Activated CD8-positive, alpha-beta T cell treated with anti-CD3 and anti-CD28 coated beads for 36 hours (primary cell): ENCODE measurements at regions of chr20 and their contacts with region 1.

Region 1: DNA sequence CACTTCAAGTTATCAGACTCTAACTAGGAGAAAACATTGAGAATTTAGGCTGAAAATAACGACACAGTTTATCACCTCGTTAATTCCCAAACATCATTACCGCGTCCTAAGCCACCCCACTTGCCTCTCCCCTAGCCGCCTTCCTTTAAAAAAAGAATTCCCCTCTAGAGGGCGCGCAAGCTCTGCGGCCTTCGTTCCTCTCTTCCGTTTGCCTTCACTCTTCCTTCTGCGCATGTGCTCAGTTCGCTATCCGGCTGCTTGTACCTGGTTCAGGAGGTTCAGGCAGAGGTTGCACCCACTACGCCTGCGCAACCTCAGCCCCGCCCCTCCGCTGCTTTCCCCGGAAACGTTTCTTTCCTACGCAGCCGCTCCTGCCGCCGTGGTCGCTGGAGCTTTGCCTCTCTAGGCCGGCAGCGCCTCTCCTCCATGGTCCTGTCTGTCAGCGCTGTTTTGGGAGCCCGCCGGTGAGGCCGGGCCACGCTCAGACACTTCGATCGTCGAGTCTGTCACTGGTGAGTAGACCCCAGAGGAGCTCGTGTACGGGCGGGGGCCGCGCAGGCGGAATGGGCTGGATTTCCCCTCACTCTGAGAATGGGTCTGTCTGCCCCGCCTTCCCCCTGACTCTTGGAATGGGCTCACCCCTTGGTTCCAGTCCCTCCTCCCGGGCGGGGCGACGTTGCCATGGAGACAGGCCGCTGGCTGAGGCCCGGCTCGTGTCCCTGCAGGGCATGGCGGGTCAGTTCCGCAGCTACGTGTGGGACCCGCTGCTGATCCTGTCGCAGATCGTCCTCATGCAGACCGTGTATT is at the start of gene SYS1:
- DNase-seq: peak; percentile 98
- ATAC-seq: peak; percentile 90
- H3K4me3 Mint-ChIP-seq: peak within 1 kb of the TSS; percentile 100
- H3K27ac Mint-ChIP-seq: peak within 1 kb of the TSS; percentile 98
- H3K4me1 Mint-ChIP-seq: peaks cover 48% of the 10 kb centered on the region
- H3K27me3 Mint-ChIP-seq: no peaks in the 10 kb centered on the region
- CTCF ChIP-seq: peak; percentile 89
- total RNA-seq, gene SYS1: 19.6 to 20.7 TPM

Region 2: DNA sequence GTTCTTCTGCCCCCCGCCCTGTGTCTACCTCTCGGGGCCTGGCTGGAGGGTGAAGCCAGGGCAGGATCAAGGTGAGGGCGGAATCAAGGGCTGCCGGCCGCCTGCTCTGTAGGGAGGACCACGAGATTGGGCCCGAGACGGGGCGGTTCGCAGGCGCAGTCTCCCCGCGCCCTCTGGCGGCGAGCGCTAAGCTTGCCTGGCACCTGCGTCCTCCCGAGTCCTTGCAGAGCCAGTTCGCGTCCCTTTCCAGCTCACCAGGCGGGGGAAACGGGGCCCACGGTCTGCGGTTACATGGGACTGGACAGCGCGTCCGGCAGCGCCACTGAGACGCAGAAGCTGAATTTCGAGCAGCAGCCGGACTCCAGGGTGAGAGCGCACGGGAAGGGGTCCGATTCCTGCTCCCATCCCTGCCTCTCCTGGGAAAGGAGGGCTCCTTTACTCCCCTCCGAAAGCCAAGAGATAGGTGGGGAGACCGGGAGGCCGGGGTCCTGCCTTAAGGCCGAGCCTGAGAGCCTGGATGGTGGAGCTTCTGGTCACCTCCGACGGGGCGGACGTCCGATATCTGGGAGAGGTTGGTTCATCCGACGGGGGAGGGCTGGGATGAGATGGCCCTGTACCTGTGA is 51.3 kb before region 1 on chr20:
- CTCF ChIA-PET with region 1: interaction called, 4 read pairs
- POLR2A ChIA-PET with region 1: no interaction called
- intact Hi-C with region 1: loop called (anchors 5 kb)
- DNase-seq: peak; percentile 74
- ATAC-seq: peak; percentile 80
- H3K4me3 Mint-ChIP-seq: no peak overlapping the region
- H3K27ac Mint-ChIP-seq: no peak overlapping the region
- H3K4me1 Mint-ChIP-seq: peaks cover 5% of the 10 kb centered on the region
- H3K27me3 Mint-ChIP-seq: peaks cover 57% of the 10 kb centered on the region
- CTCF ChIP-seq: peak; percentile 93

Region 3: GRCh38 chr20:45322952-45323383 is 40.0 kb before region 1 on chr20:
- CTCF ChIA-PET with region 1: interaction called, 37 read pairs
- POLR2A ChIA-PET with region 1: interaction called, 4 read pairs
- intact Hi-C with region 1: no loop called
- DNase-seq: peak; percentile 43
- ATAC-seq: no peak
- H3K4me3 Mint-ChIP-seq: no peak overlapping the region
- H3K27ac Mint-ChIP-seq: no peak overlapping the region
- H3K4me1 Mint-ChIP-seq: peaks cover 25% of the 10 kb centered on the region
- H3K27me3 Mint-ChIP-seq: no peaks in the 10 kb centered on the region
- CTCF ChIP-seq: no peak

Region 4: GRCh38 chr20:45347936-45348778 is 14.8 kb before region 1 on chr20 and contains the start of gene SDC4:
- CTCF ChIA-PET with region 1: interaction called, 18 read pairs
- POLR2A ChIA-PET with region 1: interaction called, 21 read pairs
- intact Hi-C with region 1: no loop called
- DNase-seq: peak; percentile 68
- ATAC-seq: peak; percentile 80
- H3K4me3 Mint-ChIP-seq: peak within 1 kb of the TSS; percentile 79
- H3K27ac Mint-ChIP-seq: peak within 1 kb of the TSS; percentile 81
- H3K4me1 Mint-ChIP-seq: peaks cover 40% of the 10 kb centered on the region
- H3K27me3 Mint-ChIP-seq: peaks cover 2% of the 10 kb centered on the region
- CTCF ChIP-seq: no peak
- total RNA-seq, gene SDC4: 21.1 to 22.0 TPM

Region 5: DNA sequence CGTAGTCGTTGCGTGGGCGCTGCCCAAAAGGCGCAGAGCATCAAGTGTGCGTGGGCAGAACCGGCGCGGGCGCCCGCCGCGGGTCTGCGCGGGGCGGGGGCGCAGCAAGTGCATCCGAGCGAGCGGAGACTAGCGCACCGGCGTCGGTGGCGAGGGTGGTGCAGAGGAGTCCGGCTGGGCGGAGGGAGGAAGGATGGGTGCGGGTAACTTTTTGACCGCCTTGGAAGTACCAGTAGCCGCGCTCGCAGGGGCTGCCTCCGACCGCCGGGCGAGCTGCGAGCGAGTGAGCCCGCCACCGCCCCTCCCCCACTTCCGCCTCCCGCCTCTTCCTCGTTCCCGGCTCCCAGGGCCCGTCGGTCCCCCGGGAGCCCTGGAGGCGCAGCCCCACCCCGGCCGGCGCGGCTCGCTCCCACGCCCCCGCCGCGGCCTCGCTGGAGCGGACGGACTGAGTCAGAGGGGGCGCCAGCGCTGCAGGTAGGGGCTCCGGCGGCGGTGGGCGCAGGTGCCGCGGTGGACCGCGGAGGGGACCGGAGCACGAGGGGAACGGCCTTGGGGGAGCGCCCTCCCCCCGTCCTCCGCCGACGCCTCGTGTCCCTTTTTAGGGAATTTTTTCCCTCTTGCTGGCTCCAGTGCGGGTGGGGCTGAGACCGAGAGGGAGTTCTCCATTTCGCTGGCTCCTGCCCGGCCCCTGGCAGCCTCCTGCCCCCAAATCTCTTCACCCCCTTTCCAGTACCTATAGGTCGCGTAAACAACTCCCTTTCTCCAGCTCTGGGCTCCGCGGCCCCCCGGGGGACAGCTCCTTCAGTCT is 43.5 kb after region 1 on chr20:
- CTCF ChIA-PET with region 1: interaction called, 12 read pairs
- POLR2A ChIA-PET with region 1: interaction called, 3 read pairs
- intact Hi-C with region 1: no loop called
- DNase-seq: peak; percentile 53
- ATAC-seq: peak; percentile 52
- H3K4me3 Mint-ChIP-seq: peak overlapping the region; percentile 73
- H3K27ac Mint-ChIP-seq: peak overlapping the region; percentile 63
- H3K4me1 Mint-ChIP-seq: peaks cover 21% of the 10 kb centered on the region
- H3K27me3 Mint-ChIP-seq: peaks cover 4% of the 10 kb centered on the region
- CTCF ChIP-seq: no peak

Region 6: GRCh38 chr20:45415774-45416637 is 53.0 kb after region 1 on chr20 and contains the start of gene PIGT:
- CTCF ChIA-PET with region 1: interaction called, 36 read pairs
- POLR2A ChIA-PET with region 1: interaction called, 14 read pairs
- intact Hi-C with region 1: loop called (anchors 5 kb)
- DNase-seq: peak; percentile 94
- ATAC-seq: peak; percentile 90
- H3K4me3 Mint-ChIP-seq: peak within 1 kb of the TSS; percentile 87
- H3K27ac Mint-ChIP-seq: peak within 1 kb of the TSS; percentile 95
- H3K4me1 Mint-ChIP-seq: peaks cover 33% of the 10 kb centered on the region
- H3K27me3 Mint-ChIP-seq: no peaks in the 10 kb centered on the region
- CTCF ChIP-seq: no peak
- total RNA-seq, gene PIGT: 43.7 to 47.7 TPM

Region 7: GRCh38 chr20:45450097-45450818 is 87.3 kb after region 1 on chr20:
- CTCF ChIA-PET with region 1: interaction called, 163 read pairs
- POLR2A ChIA-PET with region 1: interaction called, 3 read pairs
- intact Hi-C with region 1: no loop called
- DNase-seq: peak; percentile 28
- ATAC-seq: peak; percentile 66
- H3K4me3 Mint-ChIP-seq: no peak overlapping the region
- H3K27ac Mint-ChIP-seq: no peak overlapping the region
- H3K4me1 Mint-ChIP-seq: peaks cover 2% of the 10 kb centered on the region
- H3K27me3 Mint-ChIP-seq: peaks cover 2% of the 10 kb centered on the region
- CTCF ChIP-seq: peak; percentile 79